Adrenal gland (tissue), 19 donors: ENCODE measurements at regions of chr5 and their contacts with region 1.

Region 1: GRCh38 chr5:81851481-81852178 is 100.7 kb upstream of the SSBP2 start:
- DNase-seq: peak; percentile 95 to 98 (median 96)
- H3K4me3 ChIP-seq: peak overlapping the region in 2 of 4 donors; percentile 36 to 73
- H3K27ac ChIP-seq: peak overlapping the region; percentile 40 to 94 (median 88)
- H3K4me1 ChIP-seq: peaks cover 14 to 24% of the 10 kb centered on the region in 2 donors
- H3K27me3 ChIP-seq: no peaks in the 10 kb centered on the region
- CTCF ChIP-seq: peak in 1 of 6 experiments; percentile 10
- POLR2A ChIP-seq: peak in 1 of 2 donors; percentile 62

Region 2: DNA sequence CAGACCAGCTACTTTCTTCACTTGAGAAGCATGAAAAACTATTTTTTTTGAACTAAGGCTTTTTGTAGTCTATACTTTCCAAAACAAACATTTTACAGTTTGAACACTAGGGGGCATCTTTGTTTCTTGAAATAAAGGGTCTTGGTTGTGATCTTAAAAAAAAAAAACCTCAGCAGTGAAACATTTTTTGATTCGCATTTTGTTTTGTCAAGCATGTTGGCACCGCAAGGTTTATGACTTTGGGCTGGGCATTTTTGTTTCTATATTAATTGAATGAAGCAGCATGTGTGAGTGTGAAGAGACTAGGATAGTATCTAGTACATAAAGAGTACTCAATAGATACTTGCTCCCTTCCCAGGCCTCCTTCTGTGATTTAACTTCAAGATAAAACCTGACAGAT is 426.1 kb before region 1 on chr5:
- intact Hi-C with region 1: loop called (anchors 10 kb)
- DNase-seq: no peak
- H3K4me3 ChIP-seq: no peak overlapping the region
- H3K27ac ChIP-seq: peak overlapping the region in 1 of 5 donors; percentile 5
- H3K4me1 ChIP-seq: no peaks in the 10 kb centered on the region
- H3K27me3 ChIP-seq: no peaks in the 10 kb centered on the region
- CTCF ChIP-seq: peak; percentile 39 to 74 (median 60)
- POLR2A ChIP-seq: no peak

Region 3: DNA sequence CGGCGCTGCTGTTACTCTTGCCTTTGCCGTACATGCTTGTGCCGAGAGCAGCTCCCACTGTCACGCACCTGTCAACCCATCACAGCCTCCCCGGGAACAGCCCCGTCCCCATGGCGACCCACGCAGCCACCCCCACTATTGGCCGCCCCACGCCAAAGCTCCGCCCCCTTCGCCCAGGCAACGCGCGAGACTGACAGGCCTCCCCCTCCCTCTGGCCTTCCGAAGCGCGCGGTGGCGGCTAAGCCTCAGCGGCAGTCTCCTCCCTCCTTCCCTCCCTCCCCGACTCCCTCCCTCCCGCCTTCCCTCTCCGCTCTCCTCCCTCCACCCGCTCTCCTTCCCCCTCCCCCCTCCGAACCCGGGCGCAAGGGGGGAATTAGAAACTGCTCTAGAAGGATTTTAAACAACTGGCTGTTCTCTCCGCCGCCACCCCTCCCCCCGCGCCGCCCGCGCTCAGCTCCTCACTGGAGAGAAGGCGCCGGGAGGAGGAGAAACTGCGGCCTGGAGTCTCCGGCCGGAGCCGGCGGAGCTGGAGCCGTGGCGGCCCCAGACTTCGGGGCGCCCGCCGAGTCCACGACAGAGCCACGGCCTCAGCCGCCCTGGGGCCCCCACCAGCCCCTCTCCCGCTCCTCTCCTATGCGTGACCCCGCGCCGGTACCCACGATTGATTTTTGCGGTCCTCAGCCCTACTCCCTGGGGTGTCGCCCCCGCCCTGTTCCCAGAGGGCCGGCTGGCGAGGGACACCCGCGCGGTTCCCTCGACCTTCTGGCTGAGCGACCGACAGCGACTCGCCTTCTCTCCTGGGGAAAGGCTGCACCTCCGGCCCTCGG is 100.4 kb before region 1 on chr5 and contains the start of gene SSBP2:
- intact Hi-C with region 1: loop called (anchors 5 kb)
- DNase-seq: peak; percentile 99 to 100 (median 100)
- H3K4me3 ChIP-seq: peak within 1 kb of the TSS in 3 of 4 donors; percentile 44 to 94 (median 92)
- H3K27ac ChIP-seq: peak within 1 kb of the TSS; percentile 78 to 99 (median 91)
- H3K4me1 ChIP-seq: peaks cover 11 to 31% of the 10 kb centered on the region in 2 donors
- H3K27me3 ChIP-seq: no peaks in the 10 kb centered on the region
- CTCF ChIP-seq: peak in 3 of 6 experiments; percentile 7 to 32 (median 12)
- POLR2A ChIP-seq: peak; percentile 63 to 87
- total RNA-seq, gene SSBP2: 16.2 to 424 (median 26.7) TPM

Region 4: GRCh38 chr5:81794226-81794625 is 57.4 kb before region 1 on chr5:
- intact Hi-C with region 1: loop called (anchors 5 to 10 kb)
- DNase-seq: no peak
- H3K4me3 ChIP-seq: no peak overlapping the region
- H3K27ac ChIP-seq: no peak overlapping the region
- H3K4me1 ChIP-seq: no peaks in the 10 kb centered on the region
- H3K27me3 ChIP-seq: no peaks in the 10 kb centered on the region
- CTCF ChIP-seq: no peak
- POLR2A ChIP-seq: no peak

Region 5: DNA sequence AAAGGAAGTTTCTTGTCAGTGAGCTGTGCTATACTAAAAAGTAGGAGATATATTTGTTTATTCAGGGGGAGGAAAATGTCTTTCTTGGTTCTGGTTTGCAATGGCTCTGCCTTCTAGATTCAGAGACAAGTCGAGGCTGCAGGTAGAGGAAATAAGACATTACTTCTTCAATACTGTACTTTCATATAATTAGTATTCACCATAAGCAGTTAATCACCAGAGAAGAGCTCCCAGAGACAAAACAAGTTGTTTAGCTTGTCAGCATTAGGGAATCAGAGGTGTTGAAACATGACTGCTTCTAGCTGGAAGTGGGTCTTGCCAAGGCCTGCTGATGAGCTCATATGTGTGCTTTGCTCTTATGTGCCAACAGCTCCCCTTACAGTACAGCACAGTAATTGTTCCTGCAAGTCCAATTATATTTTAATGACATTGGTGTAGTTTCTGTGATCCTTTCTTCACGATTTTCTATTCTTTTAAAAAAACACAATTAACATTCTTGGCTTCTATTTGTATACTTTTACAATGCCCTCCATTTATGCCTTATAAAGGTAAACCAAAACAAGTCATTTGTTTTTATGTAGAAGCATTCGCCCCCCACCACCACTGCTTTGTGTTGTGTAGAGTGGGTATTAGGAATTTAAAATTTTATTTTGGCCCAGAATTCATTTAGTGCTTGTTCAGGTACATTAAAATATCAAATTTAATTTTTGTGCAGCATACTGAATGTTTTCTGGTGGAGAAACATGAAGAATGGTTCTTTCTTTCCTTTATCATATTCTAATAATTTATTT is 314.3 kb after region 1 on chr5:
- intact Hi-C with region 1: loop called in 1 of 2 experiments (anchors 10 kb)
- DNase-seq: peak; percentile 74 to 90 (median 84)
- H3K4me3 ChIP-seq: no peak overlapping the region
- H3K27ac ChIP-seq: peak overlapping the region in 1 of 5 donors; percentile 10
- H3K4me1 ChIP-seq: peaks cover 0 to 13% of the 10 kb centered on the region in 2 donors
- H3K27me3 ChIP-seq: no peaks in the 10 kb centered on the region
- CTCF ChIP-seq: peak; percentile 45 to 96 (median 86)
- POLR2A ChIP-seq: no peak